ENCODE measurements at regions of chr1 and their contacts with region 1.

Region 1: DNA sequence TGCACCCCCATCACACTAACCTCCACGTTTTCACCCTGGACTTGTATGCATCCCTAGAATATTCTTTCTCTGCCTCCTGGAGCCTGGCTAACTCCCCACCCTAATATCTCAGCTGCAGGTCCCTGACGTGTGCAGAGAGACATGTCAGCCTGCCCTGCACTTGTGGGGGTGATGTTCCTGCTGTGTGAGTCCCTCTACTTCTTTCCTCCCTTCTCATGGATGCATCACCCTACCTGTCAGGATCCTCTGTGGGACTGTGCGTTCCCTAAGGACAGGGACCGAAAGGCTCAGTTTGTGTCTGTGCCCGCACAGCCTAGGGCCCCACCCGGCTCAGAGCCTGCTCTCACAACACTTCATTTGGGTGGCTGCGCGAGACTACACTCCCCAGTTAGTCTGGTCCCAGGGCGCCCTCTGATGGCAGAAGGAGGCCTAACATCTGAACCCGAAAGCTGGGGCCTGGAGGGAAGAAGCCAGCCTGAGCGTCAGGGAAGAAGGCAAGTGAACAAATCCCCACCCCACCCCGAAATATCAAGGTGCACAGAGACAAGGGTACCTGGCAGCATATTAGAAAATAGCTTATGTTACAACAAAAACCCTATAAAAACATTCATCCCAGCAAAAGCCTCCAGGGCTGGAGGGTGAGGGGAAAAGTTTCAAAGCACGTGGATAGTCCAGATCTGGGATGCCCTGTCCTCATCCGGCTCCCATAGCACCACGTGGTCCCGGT is 3.7 kb downstream of the CD52 start:
- DNase-seq: peak; percentile 93 to 97 (median 96)
- ATAC-seq: peak; percentile 93
- H3K4me3 ChIP-seq: no peak overlapping the region
- H3K4me1 ChIP-seq: peaks cover 5% of the 10 kb centered on the region
- CTCF ChIP-seq: peak; percentile 72

Region 2: DNA sequence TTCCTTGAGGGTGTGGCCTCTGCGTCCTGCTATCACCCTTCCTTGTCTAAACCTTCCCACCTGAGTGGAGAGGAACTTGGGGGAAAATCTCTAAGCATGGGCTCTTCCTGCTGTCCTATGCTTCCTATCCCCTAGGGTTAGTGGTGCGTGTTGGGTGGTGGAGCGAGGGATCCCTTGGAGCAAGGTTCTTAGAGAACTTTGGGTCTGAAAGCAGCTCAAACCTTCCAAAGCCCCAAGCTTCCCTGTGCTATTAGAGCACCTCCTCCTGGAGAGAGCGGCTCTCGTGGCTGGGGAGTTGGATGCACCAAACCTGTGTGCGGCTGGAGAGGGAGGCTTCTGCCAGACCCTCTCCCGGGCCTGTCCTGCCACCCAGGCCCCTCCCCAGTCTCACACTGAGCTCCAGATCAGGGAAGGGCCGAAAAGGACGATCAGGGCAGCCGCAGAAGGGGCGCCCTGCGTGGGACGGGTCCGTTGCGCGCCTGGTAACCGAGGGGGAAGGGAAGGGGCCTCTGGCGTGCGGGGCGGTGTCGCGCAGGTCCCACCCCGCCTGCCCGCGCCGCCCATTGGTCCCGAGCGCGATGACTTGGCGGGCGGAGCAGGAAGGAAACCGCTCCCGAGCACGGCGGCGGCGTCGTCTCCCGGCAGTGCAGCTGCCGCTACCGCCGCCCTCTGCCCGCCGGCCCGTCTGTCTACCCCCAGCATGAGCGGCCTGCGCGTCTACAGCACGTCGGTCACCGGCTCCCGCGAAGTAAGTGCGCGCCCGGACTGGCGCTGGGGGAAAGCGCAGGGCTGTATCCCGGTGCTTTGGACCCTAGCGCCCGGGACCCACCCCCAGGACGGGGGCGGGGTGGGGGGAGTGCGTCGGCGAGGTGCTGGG is 41.8 kb before region 1 on chr1 and contains the start of gene SH3BGRL3:
- intact Hi-C with region 1: loop called (anchors 5 kb)
- DNase-seq: peak; percentile 91 to 95 (median 94)
- ATAC-seq: peak; percentile 71
- H3K4me3 ChIP-seq: peak within 1 kb of the TSS; percentile 91
- H3K4me1 ChIP-seq: peaks cover 66% of the 10 kb centered on the region
- CTCF ChIP-seq: peak; percentile 13
- total RNA-seq, gene SH3BGRL3: 156 to 422 (median 385) TPM

Region 3: GRCh38 chr1:26597629-26598039 is 276.2 kb after region 1 on chr1:
- intact Hi-C with region 1: no loop called
- DNase-seq: no peak
- ATAC-seq: peak; percentile 40
- H3K4me3 ChIP-seq: no peak overlapping the region
- H3K4me1 ChIP-seq: no peaks in the 10 kb centered on the region
- CTCF ChIP-seq: peak; percentile 29

Region 4: GRCh38 chr1:26826261-26827105 is 505.0 kb after region 1 on chr1 and contains the start of gene ZDHHC18:
- intact Hi-C with region 1: no loop called
- DNase-seq: peak; percentile 75 to 86 (median 84)
- ATAC-seq: peak; percentile 95
- H3K4me3 ChIP-seq: peak within 1 kb of the TSS; percentile 44
- H3K4me1 ChIP-seq: peaks cover 19% of the 10 kb centered on the region
- CTCF ChIP-seq: peak; percentile 59
- total RNA-seq, gene ZDHHC18: 22.8 to 30.5 (median 26.9) TPM